ENCODE measurements at regions of chr6 and their contacts with region 1.

Region 1: DNA sequence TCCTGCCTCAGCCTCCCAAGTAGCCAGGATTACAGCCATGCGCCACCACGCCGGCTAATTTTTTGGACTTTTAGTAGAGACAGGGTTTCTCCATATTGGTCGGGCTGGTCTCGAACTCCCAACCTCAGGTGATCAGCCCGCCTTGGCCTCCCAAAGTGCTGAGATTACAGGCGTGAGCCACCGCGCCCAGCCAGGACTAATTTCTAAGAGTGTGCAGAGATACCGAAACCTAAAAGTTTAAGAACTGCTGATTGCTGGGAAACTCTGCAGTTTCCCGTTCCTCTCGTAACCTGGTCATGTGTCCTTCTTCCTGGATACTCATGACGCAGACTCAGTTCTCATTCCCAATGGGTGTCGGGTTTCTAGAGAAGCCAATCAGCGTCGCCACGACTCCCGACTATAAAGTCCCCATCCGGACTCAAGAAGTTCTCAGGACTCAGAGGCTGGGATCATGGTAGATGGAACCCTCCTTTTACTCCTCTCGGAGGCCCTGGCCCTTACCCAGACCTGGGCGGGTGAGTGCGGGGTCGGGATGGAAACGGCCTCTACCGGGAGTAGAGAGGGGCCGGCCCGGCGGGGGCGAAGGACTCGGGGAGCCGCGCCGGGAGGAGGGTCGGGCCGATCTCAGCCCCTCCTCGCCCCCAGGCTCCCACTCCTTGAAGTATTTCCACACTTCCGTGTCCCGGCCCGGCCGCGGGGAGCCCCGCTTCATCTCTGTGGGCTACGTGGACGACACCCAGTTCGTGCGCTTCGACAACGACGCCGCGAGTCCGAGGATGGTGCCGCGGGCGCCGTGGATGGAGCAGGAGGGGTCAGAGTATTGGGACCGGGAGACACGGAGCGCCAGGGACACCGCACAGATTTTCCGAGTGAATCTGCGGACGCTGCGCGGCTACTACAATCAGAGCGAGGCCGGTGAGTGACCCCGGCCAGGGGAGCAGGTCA is at the start of gene HLA-E:
- DNase-seq: peak; percentile 99
- H3K4me3 ChIP-seq: peak within 1 kb of the TSS; percentile 97
- H3K27ac ChIP-seq: peak within 1 kb of the TSS; percentile 75
- H3K4me1 ChIP-seq: peaks cover 16% of the 10 kb centered on the region
- CTCF ChIP-seq: no peak
- total RNA-seq, gene HLA-E: 131 and 156 TPM in 2 replicates

Region 2: GRCh38 chr6:30418448-30418847 is 70.9 kb before region 1 on chr6:
- CTCF ChIA-PET with region 1: no interaction called
- POLR2A ChIA-PET with region 1: no interaction called
- intact Hi-C with region 1: no loop called
- DNase-seq: no peak
- H3K4me3 ChIP-seq: no peak overlapping the region
- H3K27ac ChIP-seq: no peak overlapping the region
- H3K4me1 ChIP-seq: no peaks in the 10 kb centered on the region
- CTCF ChIP-seq: no peak

Region 3: DNA sequence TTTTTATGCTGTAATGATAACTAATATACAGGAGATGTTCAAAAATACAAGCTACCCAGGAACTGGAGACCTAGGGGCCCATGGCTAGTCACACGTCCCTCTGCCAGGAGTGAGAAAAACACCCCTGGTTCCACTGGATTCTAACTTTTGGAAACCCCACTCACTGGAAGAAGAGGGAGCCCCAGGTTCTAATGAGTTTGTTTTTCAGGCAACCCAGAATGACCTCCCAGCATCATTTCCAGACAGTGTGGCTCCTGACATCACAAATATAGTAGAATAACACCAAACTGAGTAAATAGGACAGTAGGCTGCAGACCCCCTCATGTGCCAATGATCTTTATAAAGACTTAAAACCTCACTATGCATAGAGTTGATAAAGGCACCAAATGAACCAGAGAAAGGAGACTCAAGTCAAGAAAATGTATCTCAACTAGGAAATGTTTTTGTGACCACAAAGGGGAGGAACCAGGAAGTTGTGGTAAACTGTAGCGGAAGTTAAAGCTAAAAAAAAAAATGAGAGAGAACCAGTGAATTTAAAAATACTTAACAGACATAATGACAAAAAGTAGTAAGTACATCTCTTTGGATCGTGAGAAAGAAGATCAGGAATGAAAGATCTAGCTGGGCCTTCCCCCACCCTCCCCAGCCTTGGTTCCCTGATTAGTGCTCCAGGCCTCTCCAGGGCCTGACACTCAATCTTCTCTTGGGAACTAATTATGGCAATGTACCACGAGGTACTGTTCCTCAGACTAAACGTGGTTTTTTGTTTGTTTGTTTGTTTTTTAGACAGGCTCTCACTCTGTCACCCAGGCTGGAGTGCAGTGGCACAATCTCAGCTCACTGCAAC is 19.8 kb after region 1 on chr6:
- CTCF ChIA-PET with region 1: interaction called, 3 read pairs
- POLR2A ChIA-PET with region 1: interaction called, 4 read pairs
- intact Hi-C with region 1: loop called (anchors 2 kb)
- DNase-seq: peak; percentile 76
- H3K4me3 ChIP-seq: peak overlapping the region; percentile 52
- H3K27ac ChIP-seq: peak overlapping the region; percentile 70
- H3K4me1 ChIP-seq: peaks cover 30% of the 10 kb centered on the region
- CTCF ChIP-seq: no peak

Region 4: DNA sequence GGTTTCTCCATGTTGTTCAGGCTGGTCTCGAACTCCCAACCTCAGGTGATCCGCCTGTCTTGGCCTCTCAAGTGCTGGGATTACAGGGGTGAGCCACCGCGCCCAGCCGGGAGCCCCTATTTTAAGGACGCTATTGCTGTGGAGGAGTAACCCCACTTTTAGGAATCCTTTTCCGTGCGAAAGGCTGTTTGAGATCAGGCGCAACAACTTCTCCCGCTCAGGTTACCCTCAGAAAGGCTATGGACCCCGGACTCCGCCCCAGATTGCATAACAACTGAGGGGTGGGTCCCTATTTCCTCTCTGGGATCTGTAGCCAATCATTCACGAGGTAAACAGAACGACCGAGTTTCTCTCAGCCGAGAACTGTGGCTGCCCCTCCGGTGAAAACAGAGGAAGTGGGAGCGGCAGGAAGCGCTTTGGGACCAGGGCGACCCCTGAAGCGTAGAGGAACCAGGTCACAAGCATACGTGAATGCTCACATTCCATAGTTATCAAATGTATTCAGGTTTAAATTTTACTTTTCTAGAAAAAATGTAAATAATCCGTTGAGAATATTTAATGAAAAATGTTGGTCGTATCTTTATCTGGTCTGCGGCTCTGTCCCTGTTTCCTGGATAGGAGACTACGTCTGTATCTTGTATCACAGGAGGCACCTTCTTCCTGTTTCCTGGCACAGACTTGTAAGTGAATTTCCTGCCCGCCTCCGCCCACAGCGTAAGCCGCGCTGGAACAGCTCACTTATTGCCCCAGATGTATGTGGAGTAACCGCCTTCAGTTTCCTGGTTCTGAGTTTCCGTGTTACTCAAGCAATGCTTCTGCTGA is 26.8 kb after region 1 on chr6:
- CTCF ChIA-PET with region 1: interaction called, 3 read pairs
- POLR2A ChIA-PET with region 1: interaction called, 3 read pairs
- intact Hi-C with region 1: loop called (anchors 1 kb)
- DNase-seq: peak; percentile 93
- H3K4me3 ChIP-seq: peak overlapping the region; percentile 69
- H3K27ac ChIP-seq: peak overlapping the region; percentile 77
- H3K4me1 ChIP-seq: peaks cover 15% of the 10 kb centered on the region
- CTCF ChIP-seq: no peak

Region 5: GRCh38 chr6:30752157-30752927 is 263.0 kb after region 1 on chr6:
- CTCF ChIA-PET with region 1: no interaction called
- POLR2A ChIA-PET with region 1: no interaction called
- intact Hi-C with region 1: no loop called
- DNase-seq: no peak
- H3K4me3 ChIP-seq: no peak overlapping the region
- H3K27ac ChIP-seq: no peak overlapping the region
- H3K4me1 ChIP-seq: no peaks in the 10 kb centered on the region
- CTCF ChIP-seq: no peak

Region 6: GRCh38 chr6:31031095-31031494 is 541.7 kb after region 1 on chr6:
- CTCF ChIA-PET with region 1: no interaction called
- POLR2A ChIA-PET with region 1: no interaction called
- intact Hi-C with region 1: no loop called
- DNase-seq: no peak
- H3K4me3 ChIP-seq: no peak overlapping the region
- H3K27ac ChIP-seq: no peak overlapping the region
- H3K4me1 ChIP-seq: no peaks in the 10 kb centered on the region
- CTCF ChIP-seq: no peak

Measured in OCI-LY7 (cell line).